Activated B cell treated with CpG ODN at 0.5 μM for 24 hours (primary cell): ENCODE measurements at regions of chr10 and their contacts with region 1.

Region 1: DNA sequence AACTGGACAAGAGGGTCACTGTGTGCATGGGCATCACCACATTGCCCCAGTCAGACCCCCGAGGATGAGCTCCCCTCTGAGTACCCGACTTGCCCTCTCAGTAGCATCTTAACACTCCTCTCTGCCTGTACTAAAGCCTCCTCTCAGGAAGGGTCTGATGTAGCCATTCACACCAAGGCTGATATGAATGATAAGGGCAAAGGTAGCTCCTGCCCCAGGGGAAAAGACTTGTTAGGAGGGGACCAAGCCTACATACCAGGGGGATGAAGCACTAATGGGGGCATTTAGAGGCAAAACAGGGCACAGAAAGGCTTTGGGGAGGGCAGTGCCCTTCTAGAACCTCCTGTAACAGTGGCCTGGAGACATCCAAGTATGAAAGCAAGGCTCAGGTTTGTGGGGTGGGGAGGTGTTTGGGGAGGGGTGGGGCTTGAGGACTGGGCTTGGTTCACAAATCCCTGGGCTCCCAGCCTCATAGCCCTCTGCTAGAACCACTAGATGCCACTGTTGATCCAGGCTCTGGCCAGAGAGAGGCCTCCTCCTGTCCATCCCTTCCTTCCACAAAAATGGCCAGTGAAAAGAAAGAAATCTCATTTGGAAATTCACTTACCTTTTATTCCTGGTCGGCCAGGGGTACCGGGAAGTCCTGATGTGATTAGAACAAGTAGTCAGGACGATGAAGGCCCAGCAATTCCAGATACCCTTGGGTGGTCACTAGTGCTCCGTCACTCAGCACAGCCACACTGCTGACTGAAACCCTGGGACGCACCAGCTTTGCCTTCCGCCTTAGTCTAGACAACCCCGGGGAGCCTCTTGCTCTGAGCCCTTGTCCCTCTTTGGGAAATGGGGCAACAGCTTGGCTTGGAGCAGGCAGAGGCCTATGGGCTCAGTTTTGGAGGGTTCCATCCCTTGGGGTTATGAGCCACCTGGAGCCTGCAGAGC is 40.3 kb downstream of the COL17A1 start:
- DNase-seq: no peak
- ATAC-seq: no peak
- H3K4me3 Mint-ChIP-seq: no peak overlapping the region
- H3K27ac Mint-ChIP-seq: no peak overlapping the region
- H3K4me1 Mint-ChIP-seq: no peaks in the 10 kb centered on the region
- H3K27me3 Mint-ChIP-seq: peaks cover 8% of the 10 kb centered on the region
- CTCF ChIP-seq: no peak

Region 2: GRCh38 chr10:102064868-102065560 is 1980.4 kb before region 1 on chr10 and contains the start of gene HPS6:
- CTCF ChIA-PET with region 1: no interaction called
- POLR2A ChIA-PET with region 1: no interaction called
- intact Hi-C with region 1: no loop called
- DNase-seq: peak; percentile 88
- ATAC-seq: peak; percentile 97
- H3K4me3 Mint-ChIP-seq: peak within 1 kb of the TSS; percentile 89
- H3K27ac Mint-ChIP-seq: peak within 1 kb of the TSS; percentile 90
- H3K4me1 Mint-ChIP-seq: peaks cover 24% of the 10 kb centered on the region
- H3K27me3 Mint-ChIP-seq: no peaks in the 10 kb centered on the region
- CTCF ChIP-seq: no peak
- total RNA-seq, gene HPS6: 22.8 and 23.0 TPM in 2 replicates

Region 3: GRCh38 chr10:103416436-103417147 is 628.8 kb before region 1 on chr10:
- CTCF ChIA-PET with region 1: no interaction called
- POLR2A ChIA-PET with region 1: no interaction called
- intact Hi-C with region 1: no loop called
- DNase-seq: peak; percentile 20
- ATAC-seq: peak; percentile 47
- H3K4me3 Mint-ChIP-seq: no peak overlapping the region
- H3K27ac Mint-ChIP-seq: no peak overlapping the region
- H3K4me1 Mint-ChIP-seq: no peaks in the 10 kb centered on the region
- H3K27me3 Mint-ChIP-seq: no peaks in the 10 kb centered on the region
- CTCF ChIP-seq: peak; percentile 58

Region 4: DNA sequence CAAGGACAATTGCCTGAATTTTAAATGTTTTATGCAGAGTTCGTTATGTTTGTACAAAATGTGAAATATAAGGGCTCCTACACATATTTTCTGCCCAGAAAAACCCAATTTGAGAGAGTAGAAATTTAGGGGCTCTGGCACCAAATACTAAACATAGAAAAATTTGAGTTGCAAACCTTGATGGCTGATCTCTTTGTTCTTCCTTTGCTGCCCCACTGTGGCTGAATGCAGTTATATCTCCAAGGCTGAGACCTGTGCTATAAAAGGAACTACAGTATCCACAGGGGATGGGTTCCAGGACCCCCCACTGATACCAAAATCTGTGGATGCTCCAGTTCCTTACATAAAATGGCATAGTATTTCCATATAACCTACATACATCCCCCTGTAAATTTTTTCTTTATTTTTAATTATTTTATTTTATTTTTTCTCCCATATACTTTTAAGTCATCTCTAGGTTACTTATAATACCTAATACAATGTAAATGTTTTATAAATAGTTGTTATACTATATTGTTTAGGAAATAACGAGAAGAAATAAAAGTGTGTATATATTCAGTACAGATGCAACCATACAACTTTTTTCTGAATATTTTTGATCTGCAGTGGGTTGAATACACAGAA is 164.3 kb after region 1 on chr10:
- CTCF ChIA-PET with region 1: no interaction called
- POLR2A ChIA-PET with region 1: no interaction called
- intact Hi-C with region 1: loop called (anchors 5 kb)
- DNase-seq: no peak
- ATAC-seq: no peak
- H3K4me3 Mint-ChIP-seq: no peak overlapping the region
- H3K27ac Mint-ChIP-seq: no peak overlapping the region
- H3K4me1 Mint-ChIP-seq: no peaks in the 10 kb centered on the region
- H3K27me3 Mint-ChIP-seq: peaks cover 24% of the 10 kb centered on the region
- CTCF ChIP-seq: no peak